Sciatic nerve (tissue), 2 donors: ENCODE measurements at regions of chr2 and their contacts with region 1.

Region 1: DNA sequence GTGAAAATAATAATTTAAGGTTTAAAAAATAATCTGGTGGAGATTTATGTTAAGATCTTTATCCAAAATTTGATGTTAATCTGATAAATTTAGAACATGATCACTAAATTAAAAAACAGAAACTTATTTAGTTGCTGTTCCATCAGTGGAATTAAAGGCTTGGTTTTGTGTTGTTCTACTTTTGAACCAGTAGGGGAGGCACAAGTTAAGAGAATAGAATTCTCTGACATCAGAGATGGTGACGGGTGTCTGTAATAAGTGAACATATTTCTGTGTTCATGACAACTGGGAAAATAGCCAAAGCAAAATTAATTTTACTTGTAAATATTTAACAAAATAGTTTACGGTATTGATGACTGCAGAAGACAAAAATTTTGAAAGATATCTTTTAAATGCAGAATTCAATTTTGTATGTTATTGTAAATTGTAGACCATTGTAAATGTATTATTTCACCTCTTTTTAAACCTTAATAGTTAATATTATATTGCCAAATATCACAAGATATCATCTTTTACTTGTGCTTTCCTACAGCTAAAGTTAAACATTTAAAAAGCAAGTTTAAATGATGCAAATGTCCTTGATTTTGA is 106.0 kb downstream of the UBR3 start:
- DNase-seq: no peak
- ATAC-seq: peak; percentile 84

Region 2: GRCh38 chr2:169824373-169825333 is 108.6 kb before region 1 on chr2 and contains the start of gene METTL5:
- intact Hi-C with region 1: loop called (anchors 5 kb)
- DNase-seq: peak; percentile 89
- ATAC-seq: peak; percentile 68
- total RNA-seq, gene METTL5: 43.1 TPM

Region 3: DNA sequence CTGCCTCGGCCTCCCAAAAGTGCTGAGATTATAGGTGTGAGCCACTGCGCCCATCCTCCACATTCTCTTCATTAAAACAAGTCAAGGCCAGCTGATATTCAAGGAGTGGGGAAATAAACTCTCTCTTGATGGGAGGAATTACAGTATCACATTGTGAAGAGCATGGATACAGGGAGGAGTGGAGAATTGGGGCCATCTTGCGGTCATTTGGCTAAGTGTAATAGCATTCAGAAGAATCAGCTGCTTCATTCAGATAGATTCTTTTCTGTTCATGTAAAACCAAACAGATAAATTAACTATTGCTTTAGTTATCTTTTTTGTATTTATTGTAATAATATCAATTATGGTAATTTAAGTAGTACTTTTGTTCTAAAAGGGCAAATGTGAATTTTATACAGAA is 50.3 kb after region 1 on chr2:
- intact Hi-C with region 1: no loop called
- DNase-seq: no peak
- ATAC-seq: no peak